Sciatic nerve (tissue), 2 donors: ENCODE measurements at regions of chr10 and their contacts with region 1.

Region 1: GRCh38 chr10:98194633-98195032 is 60.2 kb downstream of the R3HCC1L start:
- DNase-seq: no peak
- ATAC-seq: no peak

Region 2: DNA sequence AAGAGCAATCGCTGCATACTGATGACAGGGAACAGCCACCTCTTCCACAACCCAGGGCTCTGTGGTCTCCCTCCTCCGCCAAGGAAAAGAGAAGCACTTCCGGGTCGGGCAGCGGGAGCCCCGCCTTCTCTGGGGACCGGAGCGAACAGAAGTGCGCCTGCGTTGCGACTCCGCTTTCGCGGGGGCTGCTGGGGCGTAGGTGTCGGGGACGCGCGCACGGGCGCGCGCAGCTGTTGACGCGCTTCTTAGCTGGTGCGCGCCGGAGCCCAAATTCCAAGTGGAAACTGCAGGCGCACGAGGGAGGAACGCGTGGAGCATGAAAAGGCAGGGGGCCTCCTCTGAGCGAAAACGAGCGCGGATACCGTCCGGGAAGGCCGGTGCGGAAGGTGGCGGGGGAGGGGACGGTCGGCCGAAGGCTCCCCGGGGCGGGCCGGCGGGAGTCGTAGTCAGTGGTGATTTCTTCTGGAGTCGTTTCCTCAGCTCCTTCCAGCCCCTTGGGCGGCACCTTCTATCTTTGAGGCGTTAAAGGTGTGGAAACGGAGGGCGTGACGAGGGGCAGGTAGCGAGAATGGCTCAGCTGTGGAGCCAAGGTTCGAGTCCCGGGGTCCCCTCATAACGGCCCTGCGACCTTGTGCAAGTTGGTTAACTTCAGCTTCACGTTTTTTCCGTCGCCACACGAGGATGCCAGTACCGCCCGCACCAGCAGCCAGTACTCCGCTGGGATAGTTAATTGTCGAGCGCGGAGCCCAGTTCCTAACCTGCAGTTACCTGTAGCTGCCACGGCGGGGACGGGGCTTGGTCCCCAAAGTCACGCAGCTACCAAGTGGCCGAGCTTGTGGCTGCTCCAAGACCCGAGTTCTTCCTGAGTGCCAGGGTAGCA is 1537.6 kb after region 1 on chr10 and contains the starts of genes COX15 and CUTC:
- intact Hi-C with region 1: loop called (anchors 5 kb)
- DNase-seq: peak; percentile 98
- ATAC-seq: peak; percentile 99
- total RNA-seq, gene COX15: 32.5 TPM
- total RNA-seq, gene CUTC: 23.4 TPM